ENCODE measurements at regions of chr2 and their contacts with region 1.

Region 1: DNA sequence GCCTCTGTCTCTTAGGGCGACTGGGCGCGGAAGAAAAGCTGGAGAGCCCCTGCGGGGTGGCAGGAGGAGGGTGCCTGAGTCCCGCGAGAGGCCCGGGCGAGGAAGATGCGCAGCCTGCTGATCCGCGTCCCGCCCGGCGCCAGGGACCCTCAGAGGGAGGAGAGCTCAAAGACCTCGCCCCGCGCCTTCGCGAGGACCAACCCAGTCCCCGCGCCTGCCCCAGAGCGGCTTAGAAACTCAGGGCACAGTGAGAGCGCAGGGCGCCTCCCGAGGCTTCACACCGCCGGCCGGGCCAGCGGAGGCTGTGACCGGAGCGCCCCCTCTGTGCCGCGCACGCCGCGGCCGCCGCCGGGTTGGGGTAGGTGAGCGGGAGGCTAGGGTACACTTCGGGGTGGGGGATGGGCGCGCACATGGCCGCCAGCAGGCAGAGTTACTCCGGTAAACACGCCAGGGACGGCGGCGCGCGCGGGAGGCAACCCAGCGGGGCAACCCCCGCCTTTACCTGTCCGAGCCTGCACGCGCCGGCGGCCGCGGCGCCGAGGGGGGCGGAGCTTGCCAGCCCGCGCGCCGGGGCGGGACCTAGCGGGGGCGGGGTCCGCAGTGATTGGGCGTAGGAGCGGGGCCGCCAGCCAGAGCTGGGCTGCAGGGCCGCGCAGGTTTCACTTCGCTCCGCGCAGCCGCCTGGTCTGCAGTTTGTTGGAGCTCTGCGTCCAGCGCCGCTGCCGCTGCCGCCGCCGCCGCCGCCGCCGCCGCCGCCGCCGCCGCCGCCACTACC is at the start of gene BCL2L11:
- DNase-seq: peak; percentile 78 to 98 (median 85)
- ATAC-seq: peak; percentile 85
- H3K4me3 ChIP-seq: peak within 1 kb of the TSS; percentile 87
- H3K4me3 Mint-ChIP-seq: peak within 1 kb of the TSS; percentile 92 to 96 (median 95)
- H3K27ac ChIP-seq: peak within 1 kb of the TSS; percentile 66
- H3K27ac Mint-ChIP-seq: peak within 1 kb of the TSS; percentile 70 to 89 (median 80)
- H3K4me1 ChIP-seq: peaks cover 19 to 35% of the 10 kb centered on the region in 2 donors
- H3K4me1 Mint-ChIP-seq: peaks cover 27 to 53% (median 37%) of the 10 kb centered on the region in 7 donors
- H3K27me3 ChIP-seq: peaks cover 0 to 16% of the 10 kb centered on the region in 2 donors
- H3K27me3 Mint-ChIP-seq: peaks cover 26 to 52% (median 36%) of the 10 kb centered on the region in 5 donors
- total RNA-seq, gene BCL2L11: 33.1 to 67.6 (median 39.0) TPM

Region 2: DNA sequence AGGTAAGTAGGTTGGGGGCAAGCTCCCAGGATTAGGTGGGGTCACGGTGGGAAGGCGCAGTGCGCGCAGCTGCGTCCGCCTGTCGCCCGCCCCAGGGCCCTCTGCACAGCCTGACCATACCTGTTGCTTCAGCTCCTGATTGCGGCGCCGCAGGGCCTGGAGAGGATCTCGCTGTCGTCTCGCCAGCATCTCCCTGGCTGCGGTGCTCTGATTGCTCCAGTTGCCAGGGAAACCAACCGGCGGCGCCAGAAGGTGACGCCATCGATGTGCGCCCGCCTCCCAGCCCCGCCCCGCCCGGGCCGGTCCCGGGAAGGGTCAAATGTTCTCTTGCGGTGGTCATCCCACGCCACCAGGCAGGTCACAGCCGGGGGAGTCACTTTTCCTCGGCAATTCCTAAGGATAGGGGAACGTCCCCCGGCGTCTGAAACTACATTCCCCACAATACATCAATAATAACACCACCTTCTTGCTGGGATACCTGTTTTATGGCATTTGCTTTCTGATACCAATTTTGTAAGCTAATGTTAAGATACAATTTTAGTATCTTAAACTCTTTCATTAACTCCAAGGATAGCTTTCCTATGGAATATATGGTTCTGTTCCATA is 915.6 kb before region 1 on chr2 and contains the start of gene NPHP1:
- CTCF ChIA-PET with region 1: no interaction called
- POLR2A ChIA-PET with region 1: no interaction called
- intact Hi-C with region 1: loop called in 1 of 2 experiments (anchors 10 kb)
- DNase-seq: peak; percentile 76 to 91 (median 85)
- ATAC-seq: peak; percentile 95
- H3K4me3 ChIP-seq: peak within 1 kb of the TSS; percentile 76
- H3K4me3 Mint-ChIP-seq: peak within 1 kb of the TSS; percentile 81 to 93 (median 88)
- H3K27ac ChIP-seq: peak within 1 kb of the TSS; percentile 72
- H3K27ac Mint-ChIP-seq: peak within 1 kb of the TSS; percentile 66 to 94 (median 90)
- H3K4me1 ChIP-seq: peaks cover 6 to 7% of the 10 kb centered on the region in 2 donors
- H3K4me1 Mint-ChIP-seq: peaks cover 13 to 37% (median 25%) of the 10 kb centered on the region in 7 donors
- H3K27me3 ChIP-seq: no peaks in the 10 kb centered on the region
- H3K27me3 Mint-ChIP-seq: peaks cover 0 to 5% (median 0%) of the 10 kb centered on the region in 5 donors
- total RNA-seq, gene NPHP1: 0.11 to 0.64 (median 0.46) TPM in 4 of 5 experiments, not detected in the other

Region 3: DNA sequence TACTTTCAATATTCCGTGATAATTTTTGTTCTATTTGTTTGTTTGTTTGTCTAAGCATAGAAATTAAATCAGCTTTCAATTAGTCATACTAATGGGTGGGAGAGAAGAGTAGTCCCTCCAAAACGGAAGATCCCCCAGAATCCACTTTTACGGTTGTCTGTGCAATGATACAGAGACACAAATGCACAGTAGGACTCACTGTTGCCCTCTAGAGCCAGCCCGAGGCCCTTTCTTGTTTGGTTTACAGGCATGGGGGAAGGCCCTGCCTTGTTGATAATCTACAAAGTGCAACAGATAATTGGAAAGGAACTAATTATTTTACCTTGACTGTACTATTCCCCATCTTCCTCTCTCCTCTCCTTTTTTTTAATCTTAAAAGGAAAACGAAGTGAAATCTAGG is 266.9 kb before region 1 on chr2:
- CTCF ChIA-PET with region 1: interaction called, 3 read pairs
- POLR2A ChIA-PET with region 1: interaction called, 3 read pairs
- intact Hi-C with region 1: loop called (anchors 2 to 5 kb)
- DNase-seq: peak in 6 of 9 donors; percentile 25 to 46 (median 40)
- ATAC-seq: peak; percentile 24
- H3K4me3 ChIP-seq: no peak overlapping the region
- H3K4me3 Mint-ChIP-seq: peak overlapping the region in 7 of 10 donors; percentile 4 to 60 (median 33)
- H3K27ac ChIP-seq: no peak overlapping the region
- H3K27ac Mint-ChIP-seq: peak overlapping the region in 7 of 9 donors; percentile 32 to 77 (median 48)
- H3K4me1 ChIP-seq: peaks cover 29 to 44% of the 10 kb centered on the region in 2 donors
- H3K4me1 Mint-ChIP-seq: peaks cover 36 to 71% (median 47%) of the 10 kb centered on the region in 7 donors
- H3K27me3 ChIP-seq: no peaks in the 10 kb centered on the region
- H3K27me3 Mint-ChIP-seq: peaks cover 0 to 50% (median 0%) of the 10 kb centered on the region in 5 donors

Region 4: GRCh38 chr2:111100765-111101162 is 19.7 kb before region 1 on chr2:
- CTCF ChIA-PET with region 1: no interaction called
- POLR2A ChIA-PET with region 1: no interaction called
- intact Hi-C with region 1: no loop called
- DNase-seq: no peak
- ATAC-seq: peak; percentile 87
- H3K4me3 ChIP-seq: no peak overlapping the region
- H3K4me3 Mint-ChIP-seq: peak overlapping the region in 1 of 10 donors; percentile 5
- H3K27ac ChIP-seq: no peak overlapping the region
- H3K27ac Mint-ChIP-seq: no peak overlapping the region
- H3K4me1 ChIP-seq: peaks cover 0 to 9% of the 10 kb centered on the region in 2 donors
- H3K4me1 Mint-ChIP-seq: peaks cover 0 to 10% (median 0%) of the 10 kb centered on the region in 7 donors
- H3K27me3 ChIP-seq: no peaks in the 10 kb centered on the region
- H3K27me3 Mint-ChIP-seq: peaks cover 0 to 63% (median 0%) of the 10 kb centered on the region in 5 donors

Region 5: DNA sequence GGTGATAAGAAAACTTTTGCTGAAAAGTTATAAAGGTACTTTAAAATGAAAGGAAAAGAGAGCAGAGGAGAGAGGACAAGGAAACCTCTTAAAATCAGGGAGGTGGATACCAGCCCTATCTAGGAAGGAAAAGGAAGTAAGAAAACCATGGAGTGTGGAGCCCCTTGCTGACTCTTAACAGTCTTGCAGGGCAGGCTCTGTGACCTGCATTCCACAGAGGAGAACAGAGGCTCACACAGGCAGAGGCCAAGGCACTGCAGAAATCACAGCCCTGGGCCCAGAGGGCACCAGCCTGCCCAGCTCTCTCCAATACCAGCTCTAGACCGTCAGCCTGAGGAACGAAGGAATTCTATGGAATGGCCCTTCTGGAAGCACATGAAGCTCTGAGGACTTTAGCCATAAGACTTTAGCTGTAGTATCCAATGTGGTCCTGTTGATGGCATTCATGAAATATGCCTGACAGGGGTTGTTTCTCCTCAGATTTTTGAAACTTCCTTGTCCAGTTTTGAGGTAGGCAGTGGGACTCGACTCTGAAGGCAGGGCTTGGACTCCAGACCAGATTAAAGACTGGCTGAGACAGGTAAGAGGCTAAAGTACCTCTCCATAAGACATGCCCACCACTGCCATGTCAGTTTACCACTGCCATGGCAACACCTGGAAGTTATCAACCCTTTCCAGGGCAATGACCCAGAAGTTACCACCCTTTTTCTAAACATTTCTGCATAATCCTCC is 547.3 kb after region 1 on chr2:
- CTCF ChIA-PET with region 1: interaction called, 4 read pairs
- POLR2A ChIA-PET with region 1: no interaction called
- intact Hi-C with region 1: loop called in 1 of 2 experiments (anchors 1 kb)
- DNase-seq: peak in 1 of 9 donors; percentile 18
- ATAC-seq: peak; percentile 45
- H3K4me3 ChIP-seq: no peak overlapping the region
- H3K4me3 Mint-ChIP-seq: no peak overlapping the region
- H3K27ac ChIP-seq: no peak overlapping the region
- H3K27ac Mint-ChIP-seq: no peak overlapping the region
- H3K4me1 ChIP-seq: no peaks in the 10 kb centered on the region
- H3K4me1 Mint-ChIP-seq: peaks cover 0 to 15% (median 0%) of the 10 kb centered on the region in 7 donors
- H3K27me3 ChIP-seq: no peaks in the 10 kb centered on the region
- H3K27me3 Mint-ChIP-seq: peaks cover 0 to 18% (median 3%) of the 10 kb centered on the region in 5 donors

Region 6: DNA sequence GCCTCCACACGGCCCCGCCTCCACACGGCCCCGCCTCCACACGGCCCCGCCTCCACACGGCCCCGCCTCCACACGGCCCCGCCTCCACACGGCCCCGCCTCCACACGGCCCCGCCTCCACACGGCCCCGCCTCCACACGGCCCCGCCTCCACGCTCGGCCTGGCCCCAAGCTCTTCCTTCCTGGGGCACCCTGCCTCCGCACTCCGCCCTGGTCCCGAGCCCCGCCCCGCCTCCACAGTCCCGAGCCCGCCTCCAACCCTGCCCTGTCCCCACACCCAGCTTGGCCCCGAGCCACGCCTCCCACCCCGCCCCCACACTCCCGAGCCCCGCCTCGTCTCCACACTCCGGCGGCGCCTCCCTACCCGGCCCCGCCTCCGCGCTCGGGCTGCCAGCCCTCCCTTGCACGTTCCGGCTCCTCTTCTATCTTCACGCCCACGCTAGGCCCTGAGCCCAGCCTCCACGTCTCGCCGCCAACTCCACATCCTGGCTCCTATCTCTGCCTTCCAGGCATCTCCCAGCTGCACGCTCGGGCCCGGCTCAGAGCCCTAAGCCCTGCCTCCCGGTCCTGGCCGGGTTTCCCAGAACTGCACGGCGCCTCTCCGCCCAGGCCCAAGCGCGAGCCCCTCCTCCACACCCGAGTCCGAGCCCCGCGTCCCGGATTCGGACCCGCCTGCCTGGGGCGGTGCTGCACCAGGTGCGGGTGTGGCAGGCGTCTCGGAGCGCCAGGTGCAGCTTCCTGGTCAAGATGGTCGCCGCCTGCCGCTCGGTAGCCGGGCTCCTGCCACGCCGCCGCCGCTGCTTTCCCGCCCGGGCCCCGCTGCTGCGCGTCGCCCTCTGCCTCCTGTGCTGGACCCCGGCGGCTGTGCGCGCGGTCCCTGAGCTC is 934.6 kb after region 1 on chr2 and contains the start of gene TMEM87B:
- CTCF ChIA-PET with region 1: no interaction called
- POLR2A ChIA-PET with region 1: no interaction called
- intact Hi-C with region 1: loop called (anchors 1 to 2 kb)
- DNase-seq: peak; percentile 90 to 98 (median 96)
- ATAC-seq: peak; percentile 80
- H3K4me3 ChIP-seq: peak within 1 kb of the TSS; percentile 85
- H3K4me3 Mint-ChIP-seq: peak within 1 kb of the TSS; percentile 80 to 100 (median 95)
- H3K27ac ChIP-seq: peak within 1 kb of the TSS; percentile 82
- H3K27ac Mint-ChIP-seq: peak within 1 kb of the TSS; percentile 92 to 100 (median 98)
- H3K4me1 ChIP-seq: peaks cover 16 to 19% of the 10 kb centered on the region in 2 donors
- H3K4me1 Mint-ChIP-seq: peaks cover 33 to 48% (median 42%) of the 10 kb centered on the region in 7 donors
- H3K27me3 ChIP-seq: no peaks in the 10 kb centered on the region
- H3K27me3 Mint-ChIP-seq: peaks cover 0 to 2% (median 0%) of the 10 kb centered on the region in 5 donors
- total RNA-seq, gene TMEM87B: 14.0 to 26.9 (median 17.4) TPM

Region 7: GRCh38 chr2:112645310-112646101 is 1525.1 kb after region 1 on chr2 and contains the start of gene SLC20A1:
- CTCF ChIA-PET with region 1: no interaction called
- POLR2A ChIA-PET with region 1: no interaction called
- intact Hi-C with region 1: loop called in 1 of 2 experiments (anchors 10 kb)
- DNase-seq: peak; percentile 95 to 100 (median 99)
- ATAC-seq: peak; percentile 98
- H3K4me3 ChIP-seq: peak within 1 kb of the TSS; percentile 71
- H3K4me3 Mint-ChIP-seq: peak within 1 kb of the TSS; percentile 89 to 100 (median 93)
- H3K27ac ChIP-seq: peak within 1 kb of the TSS; percentile 94
- H3K27ac Mint-ChIP-seq: peak within 1 kb of the TSS; percentile 79 to 94 (median 91)
- H3K4me1 ChIP-seq: peaks cover 34 to 47% of the 10 kb centered on the region in 2 donors
- H3K4me1 Mint-ChIP-seq: peaks cover 37 to 74% (median 58%) of the 10 kb centered on the region in 7 donors
- H3K27me3 ChIP-seq: no peaks in the 10 kb centered on the region
- H3K27me3 Mint-ChIP-seq: no peaks in the 10 kb centered on the region
- total RNA-seq, gene SLC20A1: 94.4 to 164 (median 120) TPM